Heart right ventricle (tissue), 16 donors: ENCODE measurements at regions of chr19 and their contacts with region 1.

Region 1: GRCh38 chr19:58439576-58440554 is at the start of gene ZNF132:
- DNase-seq: peak; percentile 92 to 99
- ATAC-seq: peak; percentile 97 to 100 (median 99)
- H3K4me3 ChIP-seq: peak within 1 kb of the TSS; percentile 54 to 95 (median 70)
- H3K27ac ChIP-seq: peak within 1 kb of the TSS in 9 of 10 donors; percentile 51 to 89 (median 78)
- H3K4me1 ChIP-seq: peaks cover 4 to 26% (median 18%) of the 10 kb centered on the region in 9 donors
- H3K27me3 ChIP-seq: no peaks in the 10 kb centered on the region
- CTCF ChIP-seq: no peak
- total RNA-seq, gene ZNF132: 3.6 to 6.7 (median 5.1) TPM

Region 2: GRCh38 chr19:58408152-58409009 is 31.5 kb before region 1 on chr19 and contains the start of gene ZNF584:
- intact Hi-C with region 1: loop called in 1 of 10 experiments (anchors 1 kb)
- DNase-seq: peak; percentile 95 to 96
- ATAC-seq: peak; percentile 97 to 99 (median 98)
- H3K4me3 ChIP-seq: peak within 1 kb of the TSS; percentile 79 to 100 (median 96)
- H3K27ac ChIP-seq: peak within 1 kb of the TSS; percentile 84 to 95 (median 91)
- H3K4me1 ChIP-seq: peaks cover 5 to 31% (median 26%) of the 10 kb centered on the region in 9 donors
- H3K27me3 ChIP-seq: no peaks in the 10 kb centered on the region
- CTCF ChIP-seq: peak in 4 of 9 donors; percentile 10 to 43 (median 30)
- total RNA-seq, gene ZNF584: 12.7 to 20.4 (median 17.6) TPM

Region 3: DNA sequence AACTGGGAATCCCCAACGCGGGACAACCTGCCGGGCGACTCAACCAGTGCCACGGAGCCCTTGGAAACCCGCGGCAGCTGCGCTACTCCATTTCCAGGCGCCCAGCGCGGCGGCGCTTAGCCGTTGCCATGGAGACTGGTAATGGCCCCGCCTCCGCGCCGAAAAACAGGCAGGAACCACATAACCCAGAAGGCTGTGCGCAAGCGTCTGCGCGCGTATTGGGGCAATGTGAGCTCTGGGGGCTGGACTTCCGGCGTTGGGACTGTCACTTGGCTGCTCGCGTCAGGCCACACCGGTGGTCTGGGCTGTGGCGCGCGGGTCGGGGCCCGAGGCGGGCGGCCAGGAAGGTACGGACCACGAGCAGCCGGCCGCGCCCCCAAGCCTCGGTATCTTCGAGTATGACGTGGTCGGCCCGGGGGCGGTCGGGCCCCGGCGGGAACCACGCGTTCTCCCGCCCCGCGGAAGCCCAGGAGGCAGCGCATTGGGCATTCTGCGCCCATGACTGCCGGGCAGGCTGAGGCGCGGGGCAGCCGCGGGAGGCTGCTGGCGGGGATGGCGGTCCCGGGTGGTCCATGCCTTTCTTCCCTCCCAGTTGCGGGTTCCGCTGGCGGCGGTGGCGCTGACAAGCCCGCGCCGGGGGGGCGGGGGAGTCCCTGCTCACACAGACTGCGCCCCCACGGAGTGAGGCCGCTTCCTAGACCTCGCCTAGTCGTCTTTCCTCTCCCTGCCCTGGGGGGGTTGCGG is 11.7 kb after region 1 on chr19 and contains the start of gene ZNF324B:
- intact Hi-C with region 1: loop called in 1 of 10 experiments (anchors 1 kb)
- DNase-seq: peak; percentile 96
- ATAC-seq: peak; percentile 97 to 99 (median 99)
- H3K4me3 ChIP-seq: peak within 1 kb of the TSS; percentile 68 to 99 (median 82)
- H3K27ac ChIP-seq: peak within 1 kb of the TSS in 8 of 10 donors; percentile 28 to 85 (median 68)
- H3K4me1 ChIP-seq: peaks cover 0 to 16% (median 5%) of the 10 kb centered on the region in 9 donors
- H3K27me3 ChIP-seq: peaks cover 0 to 15% (median 0%) of the 10 kb centered on the region in 7 donors
- CTCF ChIP-seq: no peak
- total RNA-seq, gene ZNF324B: 1.9 to 5.2 (median 3.2) TPM

Region 4: GRCh38 chr19:58466760-58467589 is 27.1 kb after region 1 on chr19 and contains the start of gene ZNF324:
- intact Hi-C with region 1: loop called in 1 of 10 experiments (anchors 2 kb)
- DNase-seq: peak; percentile 98
- ATAC-seq: peak; percentile 97 to 100 (median 99)
- H3K4me3 ChIP-seq: peak within 1 kb of the TSS; percentile 66 to 99 (median 88)
- H3K27ac ChIP-seq: peak within 1 kb of the TSS in 9 of 10 donors; percentile 63 to 91 (median 83)
- H3K4me1 ChIP-seq: peaks cover 6 to 23% (median 15%) of the 10 kb centered on the region in 9 donors
- H3K27me3 ChIP-seq: no peaks in the 10 kb centered on the region
- CTCF ChIP-seq: peak in 2 of 9 donors; percentile 15 to 20
- total RNA-seq, gene ZNF324: 3.8 to 6.1 (median 5.1) TPM